Cardiac septum (tissue), 1 donor: ENCODE measurements at regions of chr16 and their contacts with region 1.

Region 1: DNA sequence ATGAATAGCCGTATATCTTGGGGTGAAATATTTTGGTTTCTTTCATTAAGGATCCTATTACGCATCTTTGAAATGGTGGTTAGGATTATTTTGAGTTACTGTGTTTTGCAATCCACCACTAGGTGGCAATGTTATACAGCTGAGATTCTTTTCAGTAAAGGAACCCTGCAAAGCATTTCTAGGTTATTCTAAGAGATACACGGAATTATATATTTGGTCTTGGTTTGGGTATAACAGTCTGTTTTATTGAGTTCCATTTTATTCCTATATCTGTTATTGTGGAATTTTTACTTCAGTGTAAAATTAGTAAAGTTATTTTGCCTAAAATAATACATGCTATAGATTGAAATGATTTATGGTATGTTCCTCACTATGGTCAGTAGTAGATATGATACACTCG is 62.9 kb upstream of the CPHXL start:
- DNase-seq: no peak

Region 2: GRCh38 chr16:75745823-75746222 is 43.4 kb before region 1 on chr16:
- intact Hi-C with region 1: no loop called
- DNase-seq: no peak

Region 3: DNA sequence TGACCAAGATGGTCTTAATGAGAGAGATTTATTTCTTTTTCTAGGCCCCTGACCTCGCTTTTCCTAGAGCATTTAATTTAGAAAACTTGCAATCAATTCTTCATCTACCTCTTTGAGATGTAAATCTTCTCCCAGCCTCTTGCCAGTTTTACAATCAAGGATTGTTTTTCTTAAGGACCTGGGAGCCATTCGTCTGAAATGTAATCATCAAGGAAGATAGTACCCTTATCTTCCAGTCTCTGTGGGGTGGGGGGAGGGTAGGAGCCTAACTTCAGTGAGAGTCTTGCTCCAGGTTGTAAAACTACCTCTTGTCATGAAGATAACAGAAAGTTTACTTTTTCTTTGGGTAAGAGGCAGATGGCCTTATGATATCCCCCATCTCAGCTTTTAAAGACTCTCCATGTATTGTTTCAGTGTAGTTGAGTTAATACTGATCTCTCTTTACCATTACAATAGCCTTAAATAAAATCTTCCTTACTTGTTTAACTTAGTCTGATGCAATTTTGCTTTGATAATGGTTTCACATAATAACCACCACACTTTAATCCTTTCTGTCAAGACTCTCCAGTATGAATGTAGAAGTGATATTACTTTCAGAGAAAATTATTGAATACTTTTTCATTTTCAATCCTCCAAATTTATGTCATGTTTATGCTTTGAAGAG is 47.2 kb after region 1 on chr16:
- intact Hi-C with region 1: no loop called
- DNase-seq: no peak

Region 4: DNA sequence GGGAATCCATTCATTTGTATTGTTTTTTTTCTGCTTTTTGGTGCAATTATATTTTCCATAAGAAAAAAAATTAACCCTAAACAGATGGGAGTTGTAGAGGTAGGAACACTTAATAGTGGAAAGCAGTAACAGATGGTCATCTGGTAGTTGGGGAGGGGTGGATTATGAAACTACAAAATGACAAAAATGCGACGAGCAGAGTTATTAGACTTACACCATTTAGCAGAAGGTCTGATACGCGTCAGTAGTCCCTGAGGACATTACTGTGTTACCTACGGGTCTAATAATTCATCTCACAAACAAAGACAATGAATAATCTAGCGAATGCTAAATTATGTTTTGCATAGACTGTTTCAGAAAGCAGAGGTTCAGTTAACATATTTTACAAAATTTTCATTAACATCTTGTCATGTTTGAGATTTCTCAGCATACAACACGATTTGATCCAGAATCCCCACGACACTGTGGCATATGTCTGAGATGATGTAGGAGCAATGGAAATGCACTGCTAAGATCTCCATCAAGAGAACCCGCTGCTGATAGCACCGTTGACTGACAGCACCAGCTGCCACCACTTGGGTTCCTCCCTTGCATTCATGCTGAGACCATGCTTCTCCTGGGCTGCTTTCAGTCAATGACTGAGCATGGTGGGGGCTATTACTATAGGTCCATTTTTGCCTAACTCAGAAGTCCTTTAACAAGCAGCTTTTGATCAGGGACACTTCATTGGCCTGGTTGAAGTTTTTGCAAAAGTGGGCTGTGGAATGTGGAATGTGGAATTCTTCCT is 119.3 kb after region 1 on chr16:
- intact Hi-C with region 1: no loop called
- DNase-seq: no peak

Region 5: DNA sequence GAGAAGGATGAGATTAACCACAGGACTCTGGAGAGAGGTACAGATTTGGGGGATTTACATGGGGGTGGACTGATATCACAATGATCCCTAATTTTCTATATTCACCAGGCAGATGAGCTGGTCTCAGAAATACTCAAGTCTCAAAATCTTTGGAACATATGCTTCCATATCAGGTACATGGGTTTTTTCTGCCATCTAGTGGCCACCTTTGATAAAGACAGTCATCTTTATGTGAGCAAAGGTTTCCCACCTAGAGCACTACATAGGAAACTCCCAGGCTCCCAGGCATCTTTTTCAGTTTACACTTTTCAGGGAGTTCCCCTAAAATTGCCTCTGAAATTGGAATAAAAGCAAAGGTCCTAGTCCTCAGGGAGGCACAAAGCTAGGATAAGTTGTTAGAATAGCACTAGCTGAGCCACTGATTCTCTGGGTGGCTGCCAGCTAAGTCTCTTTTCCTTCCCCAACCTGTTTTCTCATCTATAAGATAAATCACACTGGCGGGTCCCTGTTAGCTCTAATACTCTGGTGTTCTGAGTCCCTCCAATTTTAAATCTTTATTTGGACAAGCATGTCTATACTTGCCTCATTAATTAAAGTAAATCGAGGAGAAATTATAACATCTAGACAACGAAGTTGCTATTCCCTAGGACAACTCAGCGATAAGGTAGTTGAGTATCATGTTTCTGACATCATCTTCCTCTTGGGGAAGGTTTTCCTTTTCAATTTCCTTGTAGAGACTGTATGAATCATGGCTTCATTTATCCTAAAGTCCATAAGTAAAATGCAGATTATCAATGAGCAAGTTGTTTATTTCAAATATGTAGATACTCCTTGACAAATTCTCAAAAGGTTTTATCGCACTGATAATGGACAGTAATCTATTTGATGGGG is 1382.8 kb after region 1 on chr16:
- intact Hi-C with region 1: loop called (anchors 5 kb)
- DNase-seq: no peak